ENCODE measurements at regions of chr2 and their contacts with region 1.

Region 1: DNA sequence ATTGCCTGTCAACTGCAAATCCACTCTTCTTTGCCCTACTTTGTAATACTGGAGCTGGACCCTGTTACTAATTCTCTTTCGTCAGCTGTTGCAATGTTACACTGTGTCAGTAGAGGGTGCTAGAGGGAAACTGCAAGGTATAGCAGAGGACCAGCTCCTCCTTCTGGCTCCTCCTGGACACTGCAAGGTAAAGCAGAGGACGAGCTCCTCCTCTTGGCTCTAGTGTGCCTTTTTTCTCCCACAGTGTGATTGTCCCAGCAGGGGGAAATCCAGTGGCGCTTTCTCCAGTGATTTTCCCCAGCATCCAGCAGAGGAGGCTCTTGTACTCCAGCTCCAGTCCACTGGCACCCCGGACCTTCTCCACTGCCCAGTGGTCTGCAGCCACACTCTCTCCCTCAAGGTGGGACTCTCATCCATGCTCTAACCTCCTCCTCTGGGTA is 95.6 kb downstream of the CAPN13 start:
- DNase-seq: peak; percentile 68 to 81
- ATAC-seq: peak; percentile 83 to 91
- H3K4me3 ChIP-seq: no peak overlapping the region
- H3K27ac ChIP-seq: no peak overlapping the region
- H3K4me1 ChIP-seq: no peaks in the 10 kb centered on the region
- H3K27me3 ChIP-seq: no peaks in the 10 kb centered on the region
- CTCF ChIP-seq: peak; percentile 87 to 100 (median 98)
- POLR2A ChIP-seq: no peak

Region 2: GRCh38 chr2:30146438-30147147 is 565.1 kb before region 1 on chr2 and contains the start of gene YPEL5:
- in situ Hi-C with region 1: no loop called
- intact Hi-C with region 1: no loop called
- DNase-seq: peak; percentile 100
- ATAC-seq: peak; percentile 91 to 93
- H3K4me3 ChIP-seq: peak within 1 kb of the TSS; percentile 86 to 97 (median 92)
- H3K27ac ChIP-seq: peak within 1 kb of the TSS; percentile 94 to 100 (median 100)
- H3K4me1 ChIP-seq: peaks cover 34 to 40% of the 10 kb centered on the region in 2 donors
- H3K27me3 ChIP-seq: no peaks in the 10 kb centered on the region
- CTCF ChIP-seq: peak in 1 of 5 experiments; percentile 3
- POLR2A ChIP-seq: peak; percentile 96 to 98
- total RNA-seq, gene YPEL5: 31.4 to 76.7 (median 53.9) TPM

Region 3: DNA sequence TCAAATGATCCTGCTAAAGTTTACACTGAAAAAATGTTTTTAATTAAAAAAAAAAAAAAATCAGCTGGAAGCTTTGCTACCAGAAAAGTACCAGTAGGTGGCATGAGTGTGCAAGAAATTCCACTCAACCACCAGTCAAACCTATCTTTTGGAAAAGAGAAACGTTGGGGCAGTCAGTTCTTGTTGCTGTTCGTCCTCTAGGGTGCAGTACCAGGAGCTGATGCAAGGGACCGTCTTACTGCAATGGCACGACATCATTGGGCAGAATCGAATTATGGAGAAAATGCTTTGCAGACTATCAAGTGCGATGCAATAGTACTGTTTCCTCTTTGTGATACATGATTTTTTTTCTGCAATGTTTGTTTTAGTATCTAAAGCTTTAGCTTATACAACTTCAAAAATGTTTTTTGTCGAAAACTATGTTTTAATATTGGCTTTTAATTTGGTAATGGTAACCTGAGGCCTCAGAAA is 546.6 kb before region 1 on chr2:
- in situ Hi-C with region 1: loop called in 2 of 4 experiments (anchors 5 to 10 kb)
- intact Hi-C with region 1: loop called (anchors 5 kb)
- DNase-seq: peak; percentile 20 to 59
- ATAC-seq: peak; percentile 83 to 96
- H3K4me3 ChIP-seq: no peak overlapping the region
- H3K27ac ChIP-seq: no peak overlapping the region
- H3K4me1 ChIP-seq: peaks cover 3 to 9% of the 10 kb centered on the region in 2 donors
- H3K27me3 ChIP-seq: no peaks in the 10 kb centered on the region
- CTCF ChIP-seq: peak; percentile 62 to 88 (median 78)
- POLR2A ChIP-seq: no peak

Region 4: DNA sequence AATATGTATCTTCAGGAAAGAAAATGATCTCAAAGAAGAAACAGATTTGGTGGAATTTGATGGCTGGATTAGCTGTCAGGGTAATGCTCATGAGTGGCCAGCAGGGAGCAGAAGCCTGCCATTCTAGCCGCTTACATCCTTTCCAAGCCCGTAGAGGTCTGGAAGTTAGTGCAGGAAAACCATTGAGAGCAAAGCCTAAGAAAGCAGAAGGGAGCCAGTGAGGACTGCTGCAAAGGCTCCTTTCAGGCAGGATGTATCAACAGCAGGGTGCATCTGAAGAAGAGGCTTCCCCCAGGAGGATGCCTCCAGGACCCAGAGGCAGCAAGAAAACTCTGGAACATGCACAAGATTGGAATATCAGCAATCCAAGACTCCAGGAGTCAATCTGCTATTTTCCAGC is 503.2 kb before region 1 on chr2:
- in situ Hi-C with region 1: loop called (anchors 5 to 10 kb)
- intact Hi-C with region 1: loop called (anchors 1 kb)
- DNase-seq: peak; percentile 35 to 53
- ATAC-seq: peak; percentile 89
- H3K4me3 ChIP-seq: no peak overlapping the region
- H3K27ac ChIP-seq: no peak overlapping the region
- H3K4me1 ChIP-seq: no peaks in the 10 kb centered on the region
- H3K27me3 ChIP-seq: no peaks in the 10 kb centered on the region
- CTCF ChIP-seq: peak; percentile 79 to 92 (median 82)
- POLR2A ChIP-seq: no peak

Region 5: DNA sequence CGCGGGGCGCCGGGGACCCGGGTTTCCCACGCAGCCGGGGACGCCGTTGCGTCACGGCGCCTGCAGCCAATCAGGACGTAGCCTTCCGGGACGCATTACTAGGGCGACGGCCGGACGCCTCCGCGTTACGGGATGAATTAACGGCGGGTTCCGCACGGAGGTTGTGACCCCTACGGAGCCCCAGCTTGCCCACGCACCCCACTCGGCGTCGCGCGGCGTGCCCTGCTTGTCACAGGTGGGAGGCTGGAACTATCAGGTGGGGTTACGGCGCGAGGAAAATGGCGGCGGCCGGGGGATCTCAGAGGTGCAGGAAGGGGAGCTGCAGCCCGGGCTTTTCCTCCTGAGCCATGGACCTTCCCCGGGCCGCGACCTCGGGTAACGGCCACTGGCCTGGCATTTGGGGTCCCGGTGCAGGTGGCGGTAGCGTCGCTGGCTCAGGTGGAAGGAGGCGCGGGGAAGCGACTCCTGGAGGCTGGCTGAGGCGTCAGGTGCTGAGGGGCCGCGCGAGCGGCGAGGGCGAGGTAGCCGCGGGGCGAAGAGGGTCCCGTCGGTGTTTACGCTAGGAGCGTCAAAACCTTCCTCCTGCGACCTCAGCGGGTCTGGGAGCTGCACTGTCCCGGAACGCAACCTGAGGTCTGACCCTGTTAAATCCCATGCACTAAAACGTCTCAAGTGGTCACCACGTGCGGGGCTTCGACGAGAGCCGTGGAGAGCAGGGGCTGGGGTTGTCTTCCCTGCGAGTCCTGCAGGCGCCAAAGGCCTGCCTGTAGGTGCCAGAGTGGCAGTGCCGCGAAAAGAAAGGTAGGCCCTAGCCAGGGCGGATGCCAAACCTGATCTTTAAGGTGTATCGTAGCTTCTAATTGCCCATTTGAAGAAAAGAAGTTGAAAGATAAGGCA is 264.3 kb before region 1 on chr2 and contains the start of gene LCLAT1:
- in situ Hi-C with region 1: no loop called
- intact Hi-C with region 1: loop called (anchors 10 kb)
- DNase-seq: peak; percentile 64 to 71
- ATAC-seq: peak; percentile 90 to 91
- H3K4me3 ChIP-seq: peak within 1 kb of the TSS; percentile 72 to 99 (median 96)
- H3K27ac ChIP-seq: peak within 1 kb of the TSS; percentile 68 to 88 (median 79)
- H3K4me1 ChIP-seq: peaks cover 17 to 18% of the 10 kb centered on the region in 2 donors
- H3K27me3 ChIP-seq: no peaks in the 10 kb centered on the region
- CTCF ChIP-seq: no peak
- POLR2A ChIP-seq: no peak
- total RNA-seq, gene LCLAT1: 4.3 to 14.5 (median 11.3) TPM

Region 6: DNA sequence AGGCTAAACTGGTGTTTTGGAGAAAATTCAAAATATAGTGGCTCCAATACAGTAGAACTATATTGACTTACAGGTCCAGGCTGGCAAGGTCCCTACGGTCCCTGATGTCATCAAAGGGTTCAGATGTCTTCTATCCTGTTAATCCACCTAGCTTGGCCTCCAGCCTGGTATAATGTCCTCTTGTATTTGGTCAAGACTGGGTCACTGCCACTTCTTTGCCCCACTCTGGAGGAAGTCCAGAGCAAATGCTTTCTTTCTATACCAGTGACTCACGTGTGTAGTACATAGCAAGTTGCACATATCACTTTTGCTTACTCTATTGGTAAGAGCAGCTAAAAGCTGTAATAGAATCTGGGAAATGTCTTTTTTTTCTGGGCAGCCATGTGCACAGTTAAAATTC is 183.8 kb before region 1 on chr2:
- in situ Hi-C with region 1: no loop called
- intact Hi-C with region 1: loop called (anchors 10 kb)
- DNase-seq: peak in 1 of 2 donors; percentile 20
- ATAC-seq: peak; percentile 25 to 30
- H3K4me3 ChIP-seq: no peak overlapping the region
- H3K27ac ChIP-seq: peak overlapping the region; percentile 1 to 51 (median 10)
- H3K4me1 ChIP-seq: peaks cover 28 to 35% of the 10 kb centered on the region in 2 donors
- H3K27me3 ChIP-seq: no peaks in the 10 kb centered on the region
- CTCF ChIP-seq: no peak
- POLR2A ChIP-seq: no peak

Region 7: GRCh38 chr2:31170071-31170698 is 458.5 kb after region 1 on chr2:
- in situ Hi-C with region 1: loop called in 3 of 4 experiments (anchors 5 to 10 kb)
- intact Hi-C with region 1: loop called (anchors 1 kb)
- DNase-seq: peak; percentile 26 to 46
- ATAC-seq: peak; percentile 82 to 83
- H3K4me3 ChIP-seq: no peak overlapping the region
- H3K27ac ChIP-seq: no peak overlapping the region
- H3K4me1 ChIP-seq: no peaks in the 10 kb centered on the region
- H3K27me3 ChIP-seq: no peaks in the 10 kb centered on the region
- CTCF ChIP-seq: peak; percentile 59 to 85 (median 79)
- POLR2A ChIP-seq: no peak

Measured in gastrocnemius medialis (tissue), 4 donors.